Right ventricle myocardium inferior (tissue), 1 donor: ENCODE measurements at regions of chr9 and their contacts with region 1.

Region 1: DNA sequence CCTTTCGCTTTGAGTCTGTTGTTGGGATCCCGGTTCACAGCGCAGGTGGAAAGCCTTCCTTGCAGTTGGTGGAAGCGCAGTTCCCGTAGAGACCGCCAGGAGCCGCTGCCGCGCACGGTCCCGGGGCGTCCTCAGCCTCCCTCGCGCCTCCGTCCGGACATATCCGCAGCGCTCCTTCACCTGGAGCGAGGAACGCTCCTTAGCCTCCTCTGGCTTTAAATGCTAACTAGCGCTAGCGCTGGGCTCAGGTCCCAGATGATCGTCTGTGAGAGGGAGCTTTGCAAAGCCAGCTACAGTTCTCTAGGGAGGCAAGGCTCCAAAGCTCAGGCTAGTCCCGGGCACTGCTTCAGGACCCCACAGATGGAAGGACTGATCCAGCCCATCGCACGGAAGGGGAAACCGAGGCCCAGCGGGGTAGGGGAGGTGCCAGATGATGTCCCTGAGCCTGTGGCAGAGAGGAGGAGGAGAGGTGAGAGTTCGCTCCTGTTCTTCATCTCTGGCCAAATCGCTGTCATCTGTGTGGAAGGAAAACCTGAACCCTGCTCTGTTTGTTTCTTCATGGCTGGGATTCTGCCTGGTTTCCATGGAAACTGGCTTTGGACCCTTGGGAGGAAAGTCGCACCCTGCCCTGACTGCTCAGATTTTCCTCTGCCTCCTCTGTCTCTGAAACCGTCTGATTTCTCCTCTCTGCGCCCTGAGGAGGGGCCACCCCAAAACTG is 31.4 kb downstream of the COL15A1 start:
- DNase-seq: peak; percentile 93
- ATAC-seq: peak; percentile 59

Region 2: DNA sequence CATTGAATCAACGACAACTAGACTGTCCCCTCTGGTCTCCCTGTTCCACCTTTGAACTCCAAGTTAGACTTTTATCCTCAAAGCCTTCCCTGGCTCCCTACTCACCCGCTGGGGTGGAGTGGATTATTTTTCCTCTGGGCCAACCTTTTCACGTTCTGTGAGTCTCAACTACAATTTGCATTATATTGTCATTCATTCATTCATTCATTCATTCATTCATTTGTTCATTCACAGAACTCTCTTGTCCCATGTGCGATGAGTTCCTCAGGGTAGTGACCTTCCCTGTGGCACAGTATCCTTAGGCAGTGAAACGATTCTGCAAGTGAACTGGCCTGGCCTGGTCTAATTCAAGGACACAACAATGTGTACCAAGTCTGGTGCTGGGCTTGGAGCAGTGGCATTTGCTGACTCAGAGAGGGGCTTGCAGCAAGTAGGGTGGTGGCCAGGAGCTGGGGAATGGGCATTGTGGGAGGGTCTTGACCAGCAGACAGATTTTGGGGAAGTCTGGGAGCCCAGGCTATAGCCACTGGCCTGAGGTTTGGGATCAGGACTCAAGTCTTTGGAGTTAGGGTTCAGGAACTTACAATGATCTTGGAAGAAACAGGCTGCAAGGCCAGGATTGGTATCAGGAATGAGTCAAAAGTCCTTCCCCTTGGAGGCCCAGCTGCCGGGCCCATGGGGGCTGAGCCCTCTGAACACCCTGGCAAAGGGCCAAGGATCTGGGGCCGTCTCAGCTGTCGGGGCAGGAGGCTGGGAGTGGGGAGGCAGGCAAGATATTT is 68.7 kb before region 1 on chr9:
- intact Hi-C with region 1: loop called (anchors 5 kb)
- DNase-seq: peak; percentile 81
- ATAC-seq: no peak

Region 3: DNA sequence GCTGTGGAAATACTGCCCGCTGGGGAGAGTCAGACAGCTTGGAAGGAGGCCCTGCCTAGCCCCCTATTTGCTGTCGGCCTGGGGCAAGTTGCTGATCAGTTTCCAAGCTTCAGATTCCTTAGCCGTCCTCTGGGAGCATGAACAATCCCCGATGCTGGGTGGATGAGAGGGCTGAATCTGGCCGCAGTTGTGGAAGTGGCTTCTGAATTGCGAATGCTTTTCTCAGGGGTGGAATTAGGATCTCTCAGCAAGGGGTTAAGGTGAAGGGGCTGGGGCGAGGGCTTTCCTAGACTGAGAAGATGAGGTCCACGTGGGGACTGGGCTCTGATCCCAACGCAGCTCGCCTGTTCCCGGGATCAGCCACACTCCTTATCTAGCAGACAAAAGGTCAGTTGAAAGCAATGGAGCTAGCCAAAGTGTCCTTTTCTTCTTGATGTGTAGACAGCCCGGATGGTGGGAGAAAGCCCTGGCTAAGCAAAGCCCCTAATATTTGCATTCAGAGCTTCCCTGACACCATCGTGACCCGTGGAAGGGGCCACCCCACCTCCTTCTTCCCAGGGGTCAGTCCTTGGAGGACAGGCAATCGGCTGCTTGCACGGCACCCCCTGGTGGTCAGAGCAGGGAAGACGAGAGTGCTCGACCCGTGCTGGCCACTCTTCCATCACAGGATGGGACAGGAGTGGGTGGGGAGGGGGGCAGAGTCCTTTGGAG is 23.4 kb after region 1 on chr9:
- intact Hi-C with region 1: loop called (anchors 1 kb)
- DNase-seq: peak; percentile 90
- ATAC-seq: peak; percentile 85

Region 4: DNA sequence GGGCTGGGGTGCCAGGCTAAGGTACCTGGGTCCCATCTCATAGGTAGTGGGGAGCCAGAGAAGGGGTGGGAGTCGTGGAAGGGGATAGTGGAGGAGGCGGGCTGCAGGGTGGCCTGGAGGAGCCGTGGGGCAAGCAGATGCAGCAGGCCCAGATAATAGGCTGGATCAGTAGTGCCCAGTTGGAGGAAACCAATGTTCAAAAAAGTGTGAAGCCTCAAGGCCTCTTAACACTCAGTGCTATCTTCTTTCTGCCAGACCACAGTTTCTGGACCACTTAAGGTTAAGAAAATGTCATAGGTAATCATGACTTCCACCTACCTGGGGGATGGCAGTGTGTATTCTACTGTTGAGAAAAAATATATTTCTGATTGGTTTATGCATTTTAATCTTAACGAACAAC is 66.5 kb after region 1 on chr9:
- intact Hi-C with region 1: loop called (anchors 2 kb)
- DNase-seq: no peak
- ATAC-seq: no peak